CD4-positive, alpha-beta memory T cell (primary cell): ENCODE measurements at regions of chr6 and their contacts with region 1.

Region 1: GRCh38 chr6:150987371-150987828 is 121.9 kb downstream of the MTHFD1L start:
- DNase-seq: peak in 4 of 5 donors; percentile 15 to 36 (median 24)
- H3K4me3 ChIP-seq: no peak overlapping the region
- H3K4me3 Mint-ChIP-seq: peak overlapping the region; percentile 71 to 84 (median 82)
- H3K27ac ChIP-seq: no peak overlapping the region
- H3K27ac Mint-ChIP-seq: peak overlapping the region in 6 of 7 donors; percentile 51 to 93 (median 86)
- H3K4me1 ChIP-seq: peaks cover 10% of the 10 kb centered on the region
- H3K4me1 Mint-ChIP-seq: peaks cover 5 to 8% (median 7%) of the 10 kb centered on the region in 4 donors
- H3K27me3 ChIP-seq: no peaks in the 10 kb centered on the region
- H3K27me3 Mint-ChIP-seq: no peaks in the 10 kb centered on the region

Region 2: DNA sequence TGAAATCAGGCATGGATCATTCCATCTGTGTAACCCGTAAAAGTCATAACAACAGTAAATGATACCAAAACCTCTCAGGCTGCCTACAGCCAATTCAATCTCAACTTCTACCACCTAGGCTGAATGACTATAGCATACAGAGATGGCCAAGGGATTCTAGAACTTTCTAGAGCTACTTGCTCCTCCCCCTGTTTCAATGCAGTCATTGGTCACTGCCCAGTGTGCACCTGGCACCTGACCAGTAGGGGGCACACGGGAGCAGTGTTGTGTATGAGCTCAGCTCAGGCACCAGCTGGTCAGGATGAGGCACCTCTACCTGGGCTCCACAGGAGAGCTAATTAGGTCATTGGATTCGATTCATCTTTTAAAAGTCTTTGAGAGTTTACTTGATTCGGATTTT is 301.5 kb before region 1 on chr6:
- CTCF ChIA-PET with region 1: no interaction called
- POLR2A ChIA-PET with region 1: no interaction called
- intact Hi-C with region 1: no loop called
- DNase-seq: peak in 3 of 5 donors; percentile 10 to 21 (median 10)
- H3K4me3 ChIP-seq: no peak overlapping the region
- H3K4me3 Mint-ChIP-seq: no peak overlapping the region
- H3K27ac ChIP-seq: no peak overlapping the region
- H3K27ac Mint-ChIP-seq: no peak overlapping the region
- H3K4me1 ChIP-seq: no peaks in the 10 kb centered on the region
- H3K4me1 Mint-ChIP-seq: no peaks in the 10 kb centered on the region
- H3K27me3 ChIP-seq: no peaks in the 10 kb centered on the region
- H3K27me3 Mint-ChIP-seq: no peaks in the 10 kb centered on the region

Region 3: DNA sequence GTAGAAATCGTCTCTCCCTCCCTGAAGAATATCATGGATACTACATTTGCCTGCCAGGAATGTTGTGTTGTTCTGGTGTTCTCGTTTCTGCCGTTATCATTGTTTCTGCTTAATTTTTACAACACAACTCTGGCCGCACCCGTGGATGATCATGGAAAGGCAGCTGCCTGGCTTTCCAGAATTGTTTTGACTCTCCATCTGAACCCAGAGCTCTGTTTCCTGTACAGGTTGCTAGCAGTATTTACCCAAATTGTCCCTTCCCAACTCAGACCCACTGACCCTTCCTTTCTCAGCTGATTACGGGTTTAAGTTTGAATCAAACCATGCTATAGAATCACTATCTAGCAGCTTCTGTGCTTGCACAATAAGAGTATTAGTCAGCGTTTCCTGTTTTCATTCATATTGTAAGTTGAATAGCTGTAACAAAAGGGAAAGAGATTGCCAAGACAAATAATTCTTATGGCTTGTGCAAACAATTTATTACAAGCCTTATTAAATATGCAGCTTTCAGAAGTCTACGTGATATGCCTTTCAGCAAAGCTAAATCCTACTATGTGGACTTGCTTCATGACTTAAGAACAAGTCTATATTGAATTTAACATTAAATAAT is 17.1 kb after region 1 on chr6:
- CTCF ChIA-PET with region 1: interaction called, 4 read pairs
- POLR2A ChIA-PET with region 1: interaction called, 11 read pairs
- intact Hi-C with region 1: no loop called
- DNase-seq: no peak
- H3K4me3 ChIP-seq: no peak overlapping the region
- H3K4me3 Mint-ChIP-seq: peak overlapping the region in 1 of 8 donors; percentile 19
- H3K27ac ChIP-seq: no peak overlapping the region
- H3K27ac Mint-ChIP-seq: peak overlapping the region in 2 of 7 donors; percentile 27 to 67
- H3K4me1 ChIP-seq: peaks cover 5% of the 10 kb centered on the region
- H3K4me1 Mint-ChIP-seq: peaks cover 4 to 30% (median 9%) of the 10 kb centered on the region in 4 donors
- H3K27me3 ChIP-seq: no peaks in the 10 kb centered on the region
- H3K27me3 Mint-ChIP-seq: no peaks in the 10 kb centered on the region